Heart right ventricle (tissue), 16 donors: ENCODE measurements at regions of chr20 and their contacts with region 1.

Region 1: DNA sequence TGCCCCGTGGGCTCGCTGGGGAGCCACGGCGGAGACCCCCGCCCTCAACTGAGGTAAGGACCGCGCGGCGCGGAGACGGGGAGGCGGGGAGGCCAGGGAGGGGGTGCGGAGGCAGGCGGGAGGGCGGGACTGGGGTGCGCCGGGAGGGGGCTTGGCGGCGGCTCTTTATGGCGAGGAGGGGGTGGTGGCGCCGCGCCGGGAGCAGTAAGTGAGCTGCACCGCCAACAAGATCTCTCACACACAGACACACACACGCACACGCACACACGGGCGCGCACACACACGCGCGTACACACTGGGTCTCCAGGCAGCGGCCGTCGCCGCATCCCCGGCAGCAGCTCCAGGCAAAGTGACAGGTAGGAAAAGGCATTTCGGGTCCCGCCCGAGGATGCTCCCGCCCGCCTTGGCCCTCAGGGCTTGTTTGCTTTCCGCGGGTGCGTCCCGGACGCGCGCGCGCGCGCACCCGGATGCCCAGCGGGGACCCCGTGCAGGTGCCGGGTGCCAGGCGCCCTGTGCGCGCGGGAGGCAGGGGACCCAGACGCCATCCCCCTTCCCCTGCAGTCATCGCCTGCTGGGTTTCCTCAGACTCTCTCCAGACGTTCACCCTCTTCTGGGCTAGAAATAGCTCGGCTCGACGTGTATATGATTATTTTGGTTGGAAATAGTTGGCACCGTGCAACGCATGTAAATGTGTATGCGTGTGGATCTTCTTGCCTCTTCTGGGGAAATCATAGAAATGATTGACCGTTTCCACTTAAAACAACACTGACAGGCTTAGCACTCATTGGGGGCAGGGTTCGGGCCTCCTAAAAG is at the start of gene PLCB4:
- DNase-seq: peak; percentile 51 to 52
- ATAC-seq: peak; percentile 18 to 69 (median 48)
- H3K4me3 ChIP-seq: peak within 1 kb of the TSS; percentile 70 to 97 (median 91)
- H3K27ac ChIP-seq: peak within 1 kb of the TSS; percentile 80 to 99 (median 94)
- H3K4me1 ChIP-seq: peaks cover 2 to 55% (median 38%) of the 10 kb centered on the region in 9 donors
- H3K27me3 ChIP-seq: peaks cover 0 to 25% (median 0%) of the 10 kb centered on the region in 7 donors
- CTCF ChIP-seq: no peak
- total RNA-seq, gene PLCB4: 16.2 to 33.3 (median 29.4) TPM

Region 2: GRCh38 chr20:8790442-8791074 is 278.5 kb before region 1 on chr20:
- intact Hi-C with region 1: loop called in 2 of 10 experiments (anchors 10 kb)
- DNase-seq: peak in 1 of 2 donors; percentile 19
- ATAC-seq: no peak
- H3K4me3 ChIP-seq: no peak overlapping the region
- H3K27ac ChIP-seq: no peak overlapping the region
- H3K4me1 ChIP-seq: peaks cover 0 to 10% (median 3%) of the 10 kb centered on the region in 9 donors
- H3K27me3 ChIP-seq: no peaks in the 10 kb centered on the region
- CTCF ChIP-seq: peak; percentile 91 to 98 (median 94)

Region 3: DNA sequence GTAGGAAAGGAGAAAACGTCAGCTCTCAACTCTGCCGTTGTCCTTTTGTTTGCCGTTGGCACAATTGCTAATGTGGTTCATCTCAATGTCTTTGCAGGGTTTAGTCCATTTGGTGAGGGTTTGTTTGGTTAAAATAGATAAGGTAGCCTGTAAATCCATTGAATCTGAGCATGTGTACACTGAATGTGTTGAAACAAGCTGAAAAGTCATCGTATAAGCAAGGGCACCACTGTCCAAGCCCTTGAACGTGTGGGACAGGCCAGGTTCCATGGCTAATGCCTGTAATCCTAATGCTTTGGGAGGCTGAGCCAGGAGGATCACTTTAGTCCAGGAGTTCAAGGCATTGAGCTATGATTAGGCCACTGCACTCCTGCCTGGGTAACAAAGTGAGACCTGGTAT is 224.9 kb before region 1 on chr20:
- intact Hi-C with region 1: no loop called
- DNase-seq: no peak
- ATAC-seq: no peak
- H3K4me3 ChIP-seq: no peak overlapping the region
- H3K27ac ChIP-seq: no peak overlapping the region
- H3K4me1 ChIP-seq: no peaks in the 10 kb centered on the region
- H3K27me3 ChIP-seq: no peaks in the 10 kb centered on the region
- CTCF ChIP-seq: no peak

Region 4: GRCh38 chr20:8932192-8933165 is 136.6 kb before region 1 on chr20:
- intact Hi-C with region 1: loop called in 1 of 10 experiments (anchors 10 kb)
- DNase-seq: peak in 1 of 2 donors; percentile 12
- ATAC-seq: peak in 7 of 8 donors; percentile 15 to 65 (median 46)
- H3K4me3 ChIP-seq: no peak overlapping the region
- H3K27ac ChIP-seq: peak overlapping the region in 8 of 10 donors; percentile 4 to 71 (median 50)
- H3K4me1 ChIP-seq: peaks cover 0 to 30% (median 8%) of the 10 kb centered on the region in 9 donors
- H3K27me3 ChIP-seq: no peaks in the 10 kb centered on the region
- CTCF ChIP-seq: no peak

Region 5: DNA sequence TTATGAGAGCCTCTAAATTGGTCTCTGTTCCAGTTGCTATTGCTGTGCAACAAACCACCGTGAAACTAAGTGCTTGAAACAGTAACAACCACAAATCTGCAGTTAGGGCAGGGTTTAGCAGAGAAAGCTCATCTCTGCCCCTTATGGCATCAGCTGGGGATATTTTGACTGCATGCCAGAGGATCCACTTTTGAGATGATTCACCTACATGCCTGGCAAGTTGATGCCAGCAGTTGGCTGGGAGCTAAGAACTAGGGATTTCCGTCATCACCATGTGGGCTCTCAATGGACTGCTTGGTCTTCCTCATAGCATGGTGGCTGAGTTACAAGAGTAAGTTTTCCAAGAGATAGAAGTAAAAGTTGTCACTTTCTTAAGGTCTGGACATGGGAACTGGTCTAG is 34.9 kb after region 1 on chr20:
- intact Hi-C with region 1: no loop called
- DNase-seq: no peak
- ATAC-seq: no peak
- H3K4me3 ChIP-seq: no peak overlapping the region
- H3K27ac ChIP-seq: no peak overlapping the region
- H3K4me1 ChIP-seq: peaks cover 0 to 18% (median 3%) of the 10 kb centered on the region in 9 donors
- H3K27me3 ChIP-seq: no peaks in the 10 kb centered on the region
- CTCF ChIP-seq: no peak

Region 6: GRCh38 chr20:9160757-9161156 is 91.7 kb after region 1 on chr20:
- intact Hi-C with region 1: loop called in 1 of 10 experiments (anchors 10 kb)
- DNase-seq: no peak
- ATAC-seq: peak; percentile 25 to 75 (median 66)
- H3K4me3 ChIP-seq: peak overlapping the region in 3 of 10 donors; percentile 1 to 20 (median 16)
- H3K27ac ChIP-seq: peak overlapping the region in 7 of 10 donors; percentile 13 to 72 (median 56)
- H3K4me1 ChIP-seq: peaks cover 3 to 47% (median 32%) of the 10 kb centered on the region in 9 donors
- H3K27me3 ChIP-seq: no peaks in the 10 kb centered on the region
- CTCF ChIP-seq: no peak

Region 7: GRCh38 chr20:9215539-9215938 is 146.5 kb after region 1 on chr20:
- intact Hi-C with region 1: loop called in 1 of 10 experiments (anchors 5 kb)
- DNase-seq: no peak
- ATAC-seq: no peak
- H3K4me3 ChIP-seq: no peak overlapping the region
- H3K27ac ChIP-seq: no peak overlapping the region
- H3K4me1 ChIP-seq: peaks cover 0 to 43% (median 20%) of the 10 kb centered on the region in 9 donors
- H3K27me3 ChIP-seq: no peaks in the 10 kb centered on the region
- CTCF ChIP-seq: peak in 7 of 9 donors; percentile 21 to 45 (median 25)

Region 8: GRCh38 chr20:9353180-9353915 is 284.3 kb after region 1 on chr20:
- intact Hi-C with region 1: loop called in 6 of 10 experiments (anchors 5 to 10 kb)
- DNase-seq: no peak
- ATAC-seq: peak in 5 of 8 donors; percentile 42 to 73 (median 68)
- H3K4me3 ChIP-seq: no peak overlapping the region
- H3K27ac ChIP-seq: peak overlapping the region in 5 of 10 donors; percentile 10 to 37 (median 28)
- H3K4me1 ChIP-seq: peaks cover 5 to 41% (median 33%) of the 10 kb centered on the region in 9 donors
- H3K27me3 ChIP-seq: no peaks in the 10 kb centered on the region
- CTCF ChIP-seq: peak in 6 of 9 donors; percentile 15 to 44 (median 28)